ENCODE measurements at regions of chr12 and their contacts with region 1.

Region 1: GRCh38 chr12:66637699-66638301 is 41.1 kb downstream of the GRIP1 start:
- DNase-seq: no peak
- CTCF ChIP-seq: no peak

Region 2: GRCh38 chr12:66627270-66627987 is 10.4 kb before region 1 on chr12:
- CTCF ChIA-PET with region 1: interaction called, 21 read pairs
- POLR2A ChIA-PET with region 1: no interaction called
- DNase-seq: no peak
- CTCF ChIP-seq: no peak

Region 3: GRCh38 chr12:66648033-66648735 is 10.4 kb after region 1 on chr12:
- CTCF ChIA-PET with region 1: interaction called, 10 read pairs
- POLR2A ChIA-PET with region 1: no interaction called
- DNase-seq: no peak
- CTCF ChIP-seq: no peak

Region 4: GRCh38 chr12:66674495-66675122 is 36.8 kb after region 1 on chr12:
- CTCF ChIA-PET with region 1: no interaction called
- POLR2A ChIA-PET with region 1: no interaction called
- DNase-seq: no peak
- CTCF ChIP-seq: no peak

Measured in GM10248 (cell line).